ENCODE measurements at regions of chr20 and their contacts with region 1.

Region 1: GRCh38 chr20:50987592-50988210 is 29.1 kb downstream of the MOCS3 start:
- DNase-seq: peak; percentile 91
- H3K4me3 ChIP-seq: peak overlapping the region; percentile 15
- H3K27ac ChIP-seq: no peak overlapping the region
- H3K4me1 ChIP-seq: no peaks in the 10 kb centered on the region
- H3K27me3 ChIP-seq: no peaks in the 10 kb centered on the region
- CTCF ChIP-seq: peak; percentile 88

Region 2: DNA sequence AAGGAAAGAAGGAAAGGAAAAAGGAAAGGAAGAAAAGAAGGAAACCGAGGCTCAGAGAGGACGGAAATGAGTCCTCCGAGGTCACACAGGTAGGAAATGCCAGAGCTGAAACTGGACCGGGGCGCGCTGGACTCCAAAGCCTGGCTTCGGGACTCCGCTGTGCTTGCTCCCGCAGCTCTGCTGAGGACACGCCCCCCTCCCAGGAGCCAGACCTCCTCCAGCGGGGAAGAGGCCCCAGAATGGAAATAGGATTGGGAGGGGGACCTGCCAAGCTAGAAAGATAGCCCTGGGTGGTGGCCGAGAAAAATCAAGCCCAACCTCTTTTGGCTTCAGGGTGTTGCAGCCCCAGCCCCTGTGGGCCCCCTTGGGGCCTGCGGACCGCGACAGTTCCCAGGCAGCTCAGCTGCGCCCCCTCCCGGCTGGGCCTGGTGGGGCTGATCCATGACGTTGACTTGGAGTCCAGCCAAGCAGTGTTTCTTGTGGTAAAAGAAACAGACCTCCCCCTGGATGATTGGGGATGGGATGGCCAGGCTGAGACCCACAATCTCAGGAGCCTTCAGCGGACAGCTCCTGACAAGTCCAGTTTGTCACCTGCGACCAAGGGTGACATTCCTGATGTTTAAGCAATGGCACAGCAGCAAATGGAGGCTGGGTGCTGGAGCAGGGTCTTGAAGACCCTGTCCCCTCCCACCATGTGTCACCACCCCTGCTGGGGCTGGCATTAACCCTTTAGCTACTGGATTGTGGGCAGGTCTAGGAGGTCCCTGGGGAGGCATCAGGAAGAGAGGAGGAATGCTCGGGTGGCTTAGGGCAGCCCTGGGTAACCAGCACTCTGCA is 351.8 kb before region 1 on chr20:
- CTCF ChIA-PET with region 1: no interaction called
- POLR2A ChIA-PET with region 1: no interaction called
- intact Hi-C with region 1: no loop called
- DNase-seq: peak; percentile 82
- H3K4me3 ChIP-seq: no peak overlapping the region
- H3K27ac ChIP-seq: peak overlapping the region; percentile 64
- H3K4me1 ChIP-seq: peaks cover 17% of the 10 kb centered on the region
- H3K27me3 ChIP-seq: no peaks in the 10 kb centered on the region
- CTCF ChIP-seq: peak; percentile 98

Region 3: GRCh38 chr20:51014797-51015722 is 27.4 kb after region 1 on chr20:
- CTCF ChIA-PET with region 1: interaction called, 22 read pairs
- POLR2A ChIA-PET with region 1: no interaction called
- intact Hi-C with region 1: no loop called
- DNase-seq: peak; percentile 75
- H3K4me3 ChIP-seq: no peak overlapping the region
- H3K27ac ChIP-seq: no peak overlapping the region
- H3K4me1 ChIP-seq: peaks cover 6% of the 10 kb centered on the region
- H3K27me3 ChIP-seq: no peaks in the 10 kb centered on the region
- CTCF ChIP-seq: peak; percentile 91

Region 4: GRCh38 chr20:51206032-51206662 is 218.4 kb after region 1 on chr20:
- CTCF ChIA-PET with region 1: no interaction called
- POLR2A ChIA-PET with region 1: no interaction called
- intact Hi-C with region 1: no loop called
- DNase-seq: no peak
- H3K4me3 ChIP-seq: no peak overlapping the region
- H3K27ac ChIP-seq: no peak overlapping the region
- H3K4me1 ChIP-seq: no peaks in the 10 kb centered on the region
- H3K27me3 ChIP-seq: peaks cover 36% of the 10 kb centered on the region
- CTCF ChIP-seq: no peak

Region 5: DNA sequence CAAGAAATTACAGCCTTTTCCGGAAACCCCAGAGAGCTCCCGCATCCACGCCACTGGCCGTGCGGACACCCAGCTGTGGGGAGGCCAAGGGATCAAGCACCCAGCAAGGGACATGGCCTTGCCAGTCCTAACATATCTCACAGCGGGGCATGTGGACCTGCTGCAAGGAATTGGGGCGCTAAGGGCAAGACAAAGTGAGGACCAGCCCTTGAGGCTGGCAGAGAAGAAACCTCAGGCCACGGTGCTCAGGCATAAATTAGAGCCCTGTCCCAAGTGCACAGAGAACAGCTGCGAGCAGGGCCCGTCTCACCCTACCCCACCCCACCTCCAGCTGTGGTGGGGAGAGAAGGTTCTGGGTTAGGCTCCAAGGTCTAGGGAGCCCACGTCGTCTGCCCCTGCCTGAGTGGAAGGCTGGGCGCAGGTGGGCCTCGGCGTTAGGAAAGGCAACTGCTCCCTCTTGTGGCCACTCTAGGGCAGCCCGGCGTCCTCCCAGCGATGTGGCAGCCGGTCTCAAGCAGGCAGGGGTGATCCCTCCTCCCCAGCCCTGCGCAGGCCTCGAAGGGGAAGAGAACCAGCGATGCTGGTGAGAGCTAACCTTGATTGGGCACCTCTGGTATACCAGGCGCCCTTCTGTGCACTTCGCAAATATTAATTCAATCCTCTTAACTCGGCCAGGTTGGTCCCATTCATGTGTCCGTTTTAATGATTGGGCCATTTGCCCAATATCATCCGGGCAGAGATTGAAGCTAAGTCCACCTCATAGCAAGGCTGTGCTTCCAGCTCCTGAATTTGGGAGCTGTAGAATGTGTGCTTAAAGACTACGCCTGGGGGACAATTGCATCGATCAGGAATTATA is 319.0 kb after region 1 on chr20:
- CTCF ChIA-PET with region 1: interaction called, 19 read pairs
- POLR2A ChIA-PET with region 1: no interaction called
- intact Hi-C with region 1: loop called (anchors 2 kb)
- DNase-seq: peak; percentile 78
- H3K4me3 ChIP-seq: no peak overlapping the region
- H3K27ac ChIP-seq: no peak overlapping the region
- H3K4me1 ChIP-seq: no peaks in the 10 kb centered on the region
- H3K27me3 ChIP-seq: no peaks in the 10 kb centered on the region
- CTCF ChIP-seq: peak; percentile 96

Region 6: DNA sequence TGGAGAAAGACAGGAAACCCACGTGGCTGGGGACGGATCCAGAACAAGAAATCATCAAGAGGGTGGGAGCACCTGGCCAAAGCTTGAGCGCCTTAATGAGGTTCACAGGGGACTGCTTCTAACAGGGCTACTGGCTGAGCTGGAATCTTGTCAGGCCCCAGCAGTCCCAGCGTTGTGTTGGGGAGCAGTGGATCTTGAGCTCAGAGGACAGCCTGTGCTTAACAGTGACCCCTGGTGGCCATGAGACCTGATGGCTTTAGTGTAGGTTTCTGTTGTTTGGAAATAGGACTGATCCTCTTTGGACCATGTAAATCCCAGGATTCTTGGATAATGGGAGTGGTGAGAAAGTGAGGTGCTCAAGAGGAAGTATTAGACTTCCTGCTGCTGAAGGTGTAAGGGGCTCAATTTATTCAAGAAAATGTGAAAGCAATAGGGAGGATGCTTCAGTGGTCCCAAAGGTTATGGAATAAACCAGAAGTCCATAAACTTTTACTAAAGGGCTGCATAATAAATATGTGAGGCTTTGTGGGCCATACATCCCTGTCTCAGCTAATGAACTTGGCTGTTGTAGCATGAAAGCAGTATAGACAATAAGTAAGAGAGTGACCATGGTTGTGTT is 338.6 kb after region 1 on chr20:
- CTCF ChIA-PET with region 1: interaction called, 14 read pairs
- POLR2A ChIA-PET with region 1: no interaction called
- intact Hi-C with region 1: no loop called
- DNase-seq: peak; percentile 28
- H3K4me3 ChIP-seq: no peak overlapping the region
- H3K27ac ChIP-seq: no peak overlapping the region
- H3K4me1 ChIP-seq: no peaks in the 10 kb centered on the region
- H3K27me3 ChIP-seq: no peaks in the 10 kb centered on the region
- CTCF ChIP-seq: peak; percentile 71

Region 7: DNA sequence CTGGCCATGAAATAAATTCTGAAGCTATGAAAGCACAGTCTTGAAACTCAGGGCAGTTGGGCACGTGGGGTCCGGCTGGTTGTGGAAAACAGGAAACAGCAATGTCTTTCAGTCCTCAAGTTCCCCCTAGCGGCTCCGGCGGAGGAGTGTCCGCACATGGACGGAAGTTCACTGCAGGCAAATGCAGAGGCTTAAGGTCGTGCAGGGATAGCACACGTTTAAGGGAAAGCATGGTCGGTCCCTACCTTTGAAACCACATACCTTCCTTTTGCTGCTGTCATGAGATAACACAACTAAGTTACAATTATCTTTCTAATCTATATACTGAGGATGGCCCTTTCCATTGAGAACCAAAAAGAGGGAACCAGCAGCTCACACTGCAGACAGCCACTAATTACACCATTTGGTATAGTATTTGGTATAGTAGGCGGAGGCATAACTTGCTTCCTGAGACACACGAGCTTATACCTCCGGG is 607.4 kb after region 1 on chr20:
- CTCF ChIA-PET with region 1: interaction called, 6 read pairs
- POLR2A ChIA-PET with region 1: no interaction called
- intact Hi-C with region 1: loop called (anchors 10 kb)
- DNase-seq: peak; percentile 92
- H3K4me3 ChIP-seq: no peak overlapping the region
- H3K27ac ChIP-seq: no peak overlapping the region
- H3K4me1 ChIP-seq: peaks cover 13% of the 10 kb centered on the region
- H3K27me3 ChIP-seq: no peaks in the 10 kb centered on the region
- CTCF ChIP-seq: peak; percentile 93